Lower leg skin (tissue), 4 donors: ENCODE measurements at regions of chr10 and their contacts with region 1.

Region 1: DNA sequence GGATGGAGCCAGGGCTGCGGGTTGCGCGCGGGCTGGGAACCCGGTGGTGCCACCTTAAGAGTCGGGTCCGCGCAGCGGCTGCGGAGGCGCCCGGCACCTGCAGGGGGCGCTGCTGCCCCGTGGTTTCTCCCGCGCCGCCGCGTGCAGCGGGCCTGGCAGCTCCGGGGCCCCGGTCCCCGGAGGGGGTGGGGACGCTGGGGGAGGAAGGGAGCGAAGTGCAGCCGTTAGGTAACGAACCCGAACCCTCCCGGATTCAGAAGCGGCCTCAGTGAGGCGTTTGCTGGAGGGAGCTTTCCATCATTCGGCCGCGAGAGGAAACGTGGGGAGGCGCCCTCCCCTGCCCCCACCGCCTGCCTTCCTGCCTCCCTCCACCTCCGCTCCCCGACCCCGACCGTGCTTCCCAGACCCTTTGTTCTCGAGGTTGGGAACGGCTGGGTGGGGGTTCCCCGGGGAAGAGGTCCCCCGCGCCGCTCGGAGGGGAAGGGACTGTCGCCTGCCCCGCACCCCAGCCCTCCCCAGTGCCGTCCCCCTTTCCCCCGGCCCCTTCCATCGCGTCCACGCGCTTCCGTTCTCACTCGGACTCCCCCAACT is 29.6 kb downstream of the SKIDA1 start:
- DNase-seq: peak; percentile 70 to 95
- H3K4me3 ChIP-seq: peak overlapping the region; percentile 58
- CTCF ChIP-seq: peak in 1 of 3 donors; percentile 61
- POLR2A ChIP-seq: no peak

Region 2: GRCh38 chr10:21285742-21286331 is 210.0 kb before region 1 on chr10:
- intact Hi-C with region 1: loop called (anchors 10 kb)
- DNase-seq: no peak
- H3K4me3 ChIP-seq: no peak overlapping the region
- CTCF ChIP-seq: no peak
- POLR2A ChIP-seq: no peak

Region 3: GRCh38 chr10:21953585-21954057 is 457.8 kb after region 1 on chr10:
- intact Hi-C with region 1: loop called (anchors 5 kb)
- DNase-seq: no peak
- H3K4me3 ChIP-seq: no peak overlapping the region
- CTCF ChIP-seq: no peak
- POLR2A ChIP-seq: no peak